ENCODE measurements at regions of chr1 and their contacts with region 1.

Region 1: DNA sequence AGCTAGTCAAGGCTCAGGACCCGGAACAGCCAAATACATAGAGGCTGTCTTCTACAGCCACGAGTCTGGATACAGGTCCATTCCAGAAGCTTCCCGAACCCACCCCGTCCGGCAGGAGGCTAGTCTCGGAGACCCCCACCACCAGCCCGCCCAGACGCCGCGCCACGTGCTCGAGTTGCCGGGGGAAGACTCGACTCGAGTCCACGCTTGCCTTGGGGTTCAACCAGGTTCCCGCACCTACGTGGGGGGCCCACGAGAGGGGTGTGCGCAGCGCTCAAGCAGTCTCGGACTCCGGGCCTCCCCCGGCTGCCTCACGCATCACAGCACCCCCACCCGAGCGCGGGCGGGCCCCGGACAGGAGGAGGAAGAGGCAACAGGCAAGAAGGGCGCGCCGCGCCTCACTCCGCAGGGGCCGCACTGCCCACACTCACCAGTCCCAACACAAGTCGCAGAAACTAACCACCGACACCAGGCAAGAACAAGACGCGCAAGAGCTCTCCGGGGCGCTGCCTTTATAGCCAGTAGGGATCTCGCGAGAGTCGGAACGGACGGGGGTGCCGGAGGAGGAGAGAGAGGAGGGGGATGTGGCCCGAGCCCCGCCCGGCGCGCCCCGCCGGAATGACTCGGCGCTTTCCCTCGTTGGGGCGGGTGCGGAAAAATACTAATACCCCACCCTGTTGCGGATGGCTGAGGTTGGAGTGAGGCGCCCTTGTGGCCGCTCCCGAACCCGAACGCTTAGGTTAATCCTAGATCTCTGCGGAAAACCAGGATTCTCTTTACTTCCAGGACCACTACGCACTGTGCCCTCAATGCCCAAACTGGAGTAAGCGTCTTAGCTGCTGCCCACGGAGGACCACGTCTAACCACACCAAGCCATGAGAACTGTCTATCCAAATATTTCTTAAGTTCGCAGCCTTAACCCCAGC is at the start of gene PRDX1:
- DNase-seq: peak; percentile 96 to 97
- H3K4me3 ChIP-seq: peak within 1 kb of the TSS; percentile 75
- H3K4me3 Mint-ChIP-seq: peak within 1 kb of the TSS; percentile 82
- H3K27ac Mint-ChIP-seq: peak within 1 kb of the TSS; percentile 98
- H3K4me1 ChIP-seq: peaks cover 46% of the 10 kb centered on the region
- H3K4me1 Mint-ChIP-seq: peaks cover 28% of the 10 kb centered on the region
- H3K27me3 ChIP-seq: no peaks in the 10 kb centered on the region
- H3K27me3 Mint-ChIP-seq: no peaks in the 10 kb centered on the region
- CTCF ChIP-seq: peak in 1 of 2 experiments; percentile 1
- total RNA-seq, gene PRDX1: 637 and 684 TPM in 2 replicates

Region 2: GRCh38 chr1:45499415-45499769 is 22.3 kb before region 1 on chr1:
- CTCF ChIA-PET with region 1: interaction called, 9 read pairs
- POLR2A ChIA-PET with region 1: interaction called, 17 read pairs
- intact Hi-C with region 1: no loop called
- DNase-seq: no peak
- H3K4me3 ChIP-seq: peak overlapping the region; percentile 55
- H3K4me3 Mint-ChIP-seq: peak overlapping the region; percentile 90
- H3K27ac Mint-ChIP-seq: peak overlapping the region; percentile 89
- H3K4me1 ChIP-seq: peaks cover 11% of the 10 kb centered on the region; the same call in 1 of the 2 replicates
- H3K4me1 Mint-ChIP-seq: peaks cover 32% of the 10 kb centered on the region
- H3K27me3 ChIP-seq: no peaks in the 10 kb centered on the region
- H3K27me3 Mint-ChIP-seq: no peaks in the 10 kb centered on the region
- CTCF ChIP-seq: no peak

Region 3: DNA sequence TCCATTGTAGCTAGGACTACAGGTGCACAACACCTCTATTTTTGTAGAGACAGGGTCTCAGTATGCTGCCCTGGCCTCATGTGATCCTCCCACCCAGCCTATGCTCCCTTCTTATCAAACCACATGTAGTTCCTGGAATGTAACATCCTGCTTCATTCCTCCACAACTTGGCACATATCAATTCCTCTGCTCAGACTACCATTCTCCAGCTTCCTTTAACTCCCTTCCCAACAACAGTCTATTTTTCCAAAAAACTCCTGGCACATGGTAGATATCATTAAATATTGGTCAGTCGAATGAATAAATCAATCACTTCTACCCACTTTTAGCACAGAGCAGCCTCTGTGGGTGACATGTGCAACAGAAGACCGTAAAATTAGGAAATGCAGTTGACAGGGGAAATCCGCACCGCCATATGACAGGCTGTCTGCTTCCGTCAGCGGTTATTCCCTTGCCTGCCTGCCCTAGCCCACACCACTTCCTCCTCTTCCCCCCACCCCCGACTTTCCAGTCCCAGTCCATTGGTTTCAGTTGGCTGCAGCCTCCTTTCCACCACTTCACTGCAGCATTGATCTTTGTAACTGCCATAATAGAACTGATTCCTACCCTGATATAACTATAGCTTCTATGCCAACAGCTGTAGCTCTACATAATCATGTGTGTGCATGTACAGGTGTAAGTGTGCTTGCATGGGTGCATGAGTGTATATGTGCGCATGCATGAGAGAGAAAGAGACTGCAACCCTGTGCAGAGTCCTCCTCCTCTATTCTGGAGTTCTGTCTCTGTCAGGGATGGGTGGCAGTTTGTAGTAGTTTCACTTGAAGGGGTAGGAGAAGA is 22.1 kb after region 1 on chr1:
- CTCF ChIA-PET with region 1: interaction called, 6 read pairs
- POLR2A ChIA-PET with region 1: interaction called, 14 read pairs
- intact Hi-C with region 1: no loop called
- DNase-seq: no peak
- H3K4me3 ChIP-seq: no peak overlapping the region
- H3K4me3 Mint-ChIP-seq: no peak overlapping the region
- H3K27ac Mint-ChIP-seq: no peak overlapping the region
- H3K4me1 ChIP-seq: peaks cover 10% of the 10 kb centered on the region; the same call in 1 of the 2 replicates
- H3K4me1 Mint-ChIP-seq: peaks cover 14% of the 10 kb centered on the region
- H3K27me3 ChIP-seq: no peaks in the 10 kb centered on the region
- H3K27me3 Mint-ChIP-seq: no peaks in the 10 kb centered on the region
- CTCF ChIP-seq: no peak

Region 4: GRCh38 chr1:45550401-45551351 is 29.0 kb after region 1 on chr1 and contains the start of gene AKR1A1:
- CTCF ChIA-PET with region 1: interaction called, 4 read pairs
- POLR2A ChIA-PET with region 1: interaction called, 40 read pairs
- intact Hi-C with region 1: loop called (anchors 2 kb)
- DNase-seq: peak; percentile 91 to 93
- H3K4me3 ChIP-seq: peak within 1 kb of the TSS; percentile 81
- H3K4me3 Mint-ChIP-seq: peak within 1 kb of the TSS; percentile 95
- H3K27ac Mint-ChIP-seq: peak within 1 kb of the TSS; percentile 90
- H3K4me1 ChIP-seq: 0 out of 2 replicates have a peak, but pooled peaks cover 4% of the 10 kb centered on the region
- H3K4me1 Mint-ChIP-seq: peaks cover 7% of the 10 kb centered on the region
- H3K27me3 ChIP-seq: no peaks in the 10 kb centered on the region
- H3K27me3 Mint-ChIP-seq: no peaks in the 10 kb centered on the region
- CTCF ChIP-seq: peak in 1 of 2 experiments; percentile 3
- total RNA-seq, gene AKR1A1: 119 and 129 TPM in 2 replicates

Region 5: DNA sequence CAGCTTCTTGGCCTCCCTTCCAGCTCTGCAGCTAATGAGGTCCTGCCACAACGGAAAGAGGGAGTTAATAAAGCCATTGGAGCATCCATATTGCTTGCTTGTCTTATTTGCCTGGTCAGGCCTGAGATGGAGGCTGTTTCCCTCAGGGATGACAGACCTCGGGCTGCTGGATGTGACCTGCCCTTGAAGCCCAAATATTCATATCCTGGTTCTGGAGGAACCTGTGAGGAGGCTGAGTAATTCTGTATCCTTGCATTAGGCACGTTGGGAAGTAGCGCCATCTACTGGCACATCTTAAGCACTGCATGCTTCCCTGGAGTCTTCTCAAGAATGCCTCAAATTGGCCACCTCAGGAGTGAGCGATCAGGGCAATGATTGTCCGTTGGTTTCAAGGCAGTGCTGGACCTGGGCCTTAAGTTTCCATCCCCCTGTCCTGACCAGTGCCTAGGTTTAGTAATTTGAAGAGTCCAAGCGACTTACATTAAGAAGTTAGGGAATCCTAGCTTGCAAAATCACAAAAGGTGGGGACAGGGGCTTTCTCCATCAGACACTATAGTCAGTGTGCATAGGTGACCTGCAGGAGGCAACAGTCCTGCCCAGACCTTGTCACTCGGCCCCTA is 48.4 kb after region 1 on chr1:
- CTCF ChIA-PET with region 1: interaction called, 3 read pairs
- POLR2A ChIA-PET with region 1: interaction called, 3 read pairs
- intact Hi-C with region 1: loop called (anchors 2 kb)
- DNase-seq: peak; percentile 66 to 67
- H3K4me3 ChIP-seq: no peak overlapping the region
- H3K4me3 Mint-ChIP-seq: no peak overlapping the region
- H3K27ac Mint-ChIP-seq: no peak overlapping the region
- H3K4me1 ChIP-seq: no peaks in the 10 kb centered on the region
- H3K4me1 Mint-ChIP-seq: no peaks in the 10 kb centered on the region
- H3K27me3 ChIP-seq: no peaks in the 10 kb centered on the region
- H3K27me3 Mint-ChIP-seq: no peaks in the 10 kb centered on the region
- CTCF ChIP-seq: peak; percentile 83 to 91